ENCODE measurements at regions of chr3 and their contacts with region 1.

Region 1: DNA sequence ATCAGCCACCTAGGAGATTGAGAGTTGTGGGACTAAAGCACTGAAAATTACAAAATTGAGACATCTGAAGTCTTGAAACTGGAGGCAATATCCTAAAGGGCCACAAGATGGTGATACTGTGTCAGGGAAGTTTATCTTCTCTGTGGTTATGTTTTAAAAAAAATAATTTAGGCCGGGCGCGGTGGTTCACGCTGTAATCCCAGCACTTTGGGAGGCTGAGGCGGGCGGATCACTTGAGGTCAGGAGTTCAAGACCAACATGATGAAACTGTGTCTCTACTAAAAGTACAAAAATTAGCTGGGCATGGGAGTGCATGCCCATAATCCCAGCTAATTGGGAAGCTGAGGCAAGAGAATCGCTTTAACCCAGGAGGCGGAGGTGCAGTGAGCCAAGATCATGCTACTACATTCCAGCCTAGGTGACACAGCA is 17.9 kb upstream of the NIT2 start:
- DNase-seq: peak; percentile 26
- H3K4me3 ChIP-seq: no peak overlapping the region
- H3K27ac ChIP-seq: no peak overlapping the region
- H3K27me3 ChIP-seq: no peaks in the 10 kb centered on the region
- CTCF ChIP-seq: peak; percentile 75

Region 2: DNA sequence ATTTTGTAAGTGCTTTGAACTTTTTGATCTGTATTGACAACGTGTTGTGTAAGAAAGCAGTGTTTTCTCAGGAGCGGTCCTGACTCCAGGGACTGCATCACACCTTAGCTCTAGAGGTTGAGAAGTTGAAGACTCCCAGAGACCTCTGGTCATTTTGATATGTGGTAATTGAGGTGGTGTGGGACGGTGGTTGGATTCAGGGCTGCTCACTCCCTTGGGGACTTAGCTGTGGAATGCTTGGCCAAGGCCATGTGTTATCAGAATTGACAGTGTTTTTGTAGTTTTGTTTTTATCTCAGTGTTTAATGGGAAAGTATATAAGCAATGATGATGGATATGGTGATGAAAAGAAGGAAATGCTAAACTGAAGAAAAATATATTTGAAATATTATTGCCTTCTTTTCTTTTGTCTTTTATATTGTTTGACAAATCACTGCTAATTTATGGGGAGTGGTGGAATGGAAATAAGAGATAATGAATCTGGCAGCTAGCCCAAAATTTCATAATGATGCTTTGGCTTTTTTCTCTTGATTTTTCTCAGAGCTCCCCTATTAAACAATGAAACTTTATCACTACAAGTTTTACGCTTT is 482.9 kb before region 1 on chr3:
- CTCF ChIA-PET with region 1: interaction called, 22 read pairs
- POLR2A ChIA-PET with region 1: no interaction called
- DNase-seq: no peak
- H3K4me3 ChIP-seq: no peak overlapping the region
- H3K27ac ChIP-seq: no peak overlapping the region
- H3K27me3 ChIP-seq: no peaks in the 10 kb centered on the region
- CTCF ChIP-seq: no peak

Region 3: GRCh38 chr3:100719136-100719535 is 402.5 kb after region 1 on chr3:
- CTCF ChIA-PET with region 1: no interaction called
- POLR2A ChIA-PET with region 1: no interaction called
- DNase-seq: no peak
- H3K4me3 ChIP-seq: no peak overlapping the region
- H3K27ac ChIP-seq: no peak overlapping the region
- H3K27me3 ChIP-seq: no peaks in the 10 kb centered on the region
- CTCF ChIP-seq: no peak

Measured in AG04450 (cell line).